Activated naive CD4-positive, alpha-beta T cell treated with anti-CD3 and anti-CD28 coated beads for 36 hours (primary cell): ENCODE measurements at regions of chr7 and their contacts with region 1.

Region 1: DNA sequence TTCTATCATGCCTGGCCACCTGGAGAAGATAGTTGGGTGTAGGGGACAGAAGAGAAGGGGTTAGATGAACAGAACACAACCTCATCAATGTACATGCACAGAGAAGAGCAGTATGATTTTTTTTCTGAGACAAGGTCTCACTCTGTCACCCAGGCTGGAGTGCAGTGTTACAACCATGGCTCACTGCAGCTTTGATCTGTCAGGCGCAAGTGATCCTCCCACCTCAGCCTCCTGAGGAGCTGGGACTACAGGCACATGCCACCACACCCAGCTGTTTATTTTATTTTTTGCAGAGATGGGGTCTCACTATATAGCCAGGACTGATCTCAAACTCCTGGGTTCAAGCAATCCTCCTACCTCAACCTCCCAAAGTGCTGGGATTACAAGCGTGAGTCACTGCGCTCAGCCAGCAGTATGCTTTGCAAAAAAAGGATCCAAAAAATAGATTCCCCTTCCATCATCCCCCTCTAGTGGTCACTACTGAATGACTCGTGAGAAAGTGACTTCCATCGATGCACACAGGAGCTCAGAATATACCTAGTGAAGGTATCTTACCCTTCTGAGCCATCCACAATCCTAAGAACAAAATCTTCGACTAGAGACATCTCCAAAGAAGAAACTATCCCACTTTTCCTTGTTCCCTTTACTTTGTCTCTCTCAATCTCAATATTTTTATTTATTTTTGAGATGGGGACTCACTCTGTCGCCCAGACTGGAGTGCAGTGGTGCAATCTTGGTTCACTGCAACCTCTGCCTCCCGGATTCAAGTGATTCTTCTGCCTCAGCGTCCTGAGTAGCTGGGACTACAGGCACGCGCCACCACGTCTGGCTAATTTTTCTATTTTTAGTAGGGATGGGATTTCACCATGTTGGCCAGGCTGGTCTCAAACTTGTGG is 21.0 kb downstream of the ZCWPW1 start:
- DNase-seq: peak; percentile 61
- H3K4me3 Mint-ChIP-seq: no peak overlapping the region
- H3K27ac Mint-ChIP-seq: no peak overlapping the region
- H3K4me1 Mint-ChIP-seq: peaks cover 2% of the 10 kb centered on the region
- H3K27me3 Mint-ChIP-seq: no peaks in the 10 kb centered on the region

Region 2: GRCh38 chr7:100190048-100190711 is 217.4 kb before region 1 on chr7:
- CTCF ChIA-PET with region 1: interaction called, 6 read pairs
- intact Hi-C with region 1: loop called (anchors 1 kb)
- DNase-seq: no peak
- H3K4me3 Mint-ChIP-seq: no peak overlapping the region
- H3K27ac Mint-ChIP-seq: peak overlapping the region; percentile 80
- H3K4me1 Mint-ChIP-seq: peaks cover 45% of the 10 kb centered on the region
- H3K27me3 Mint-ChIP-seq: no peaks in the 10 kb centered on the region

Region 3: GRCh38 chr7:100342765-100343164 is 64.8 kb before region 1 on chr7:
- CTCF ChIA-PET with region 1: interaction called, 10 read pairs
- intact Hi-C with region 1: no loop called
- DNase-seq: no peak
- H3K4me3 Mint-ChIP-seq: no peak overlapping the region
- H3K27ac Mint-ChIP-seq: peak overlapping the region; percentile 81
- H3K4me1 Mint-ChIP-seq: peaks cover 46% of the 10 kb centered on the region
- H3K27me3 Mint-ChIP-seq: no peaks in the 10 kb centered on the region

Region 4: DNA sequence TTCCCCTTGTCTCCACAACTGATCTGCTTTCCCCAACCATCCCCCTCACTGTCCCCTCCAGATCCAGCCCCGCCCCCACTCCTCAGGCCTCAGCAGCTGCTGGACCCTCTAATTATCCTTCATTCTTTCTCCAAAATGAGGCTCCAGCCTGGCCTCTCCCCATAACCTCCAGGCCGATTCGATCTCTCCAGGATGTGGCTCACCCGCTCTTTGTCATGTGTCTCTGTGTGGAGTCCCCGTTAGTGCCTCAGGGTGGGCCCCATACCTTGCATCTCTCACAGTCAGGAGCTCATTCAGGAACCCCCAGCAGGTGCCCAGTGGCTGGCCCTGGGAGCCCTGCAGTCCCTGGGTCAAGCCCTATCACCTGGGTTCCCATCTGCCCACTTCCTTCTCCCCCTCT is 32.9 kb before region 1 on chr7:
- CTCF ChIA-PET with region 1: interaction called, 13 read pairs
- intact Hi-C with region 1: no loop called
- DNase-seq: no peak
- H3K4me3 Mint-ChIP-seq: no peak overlapping the region
- H3K27ac Mint-ChIP-seq: no peak overlapping the region
- H3K4me1 Mint-ChIP-seq: peaks cover 13% of the 10 kb centered on the region
- H3K27me3 Mint-ChIP-seq: no peaks in the 10 kb centered on the region

Region 5: GRCh38 chr7:100396421-100396982 is 11.0 kb before region 1 on chr7:
- CTCF ChIA-PET with region 1: interaction called, 14 read pairs
- intact Hi-C with region 1: no loop called
- DNase-seq: peak; percentile 85
- H3K4me3 Mint-ChIP-seq: no peak overlapping the region
- H3K27ac Mint-ChIP-seq: no peak overlapping the region
- H3K4me1 Mint-ChIP-seq: peaks cover 28% of the 10 kb centered on the region
- H3K27me3 Mint-ChIP-seq: peaks cover 19% of the 10 kb centered on the region

Region 6: DNA sequence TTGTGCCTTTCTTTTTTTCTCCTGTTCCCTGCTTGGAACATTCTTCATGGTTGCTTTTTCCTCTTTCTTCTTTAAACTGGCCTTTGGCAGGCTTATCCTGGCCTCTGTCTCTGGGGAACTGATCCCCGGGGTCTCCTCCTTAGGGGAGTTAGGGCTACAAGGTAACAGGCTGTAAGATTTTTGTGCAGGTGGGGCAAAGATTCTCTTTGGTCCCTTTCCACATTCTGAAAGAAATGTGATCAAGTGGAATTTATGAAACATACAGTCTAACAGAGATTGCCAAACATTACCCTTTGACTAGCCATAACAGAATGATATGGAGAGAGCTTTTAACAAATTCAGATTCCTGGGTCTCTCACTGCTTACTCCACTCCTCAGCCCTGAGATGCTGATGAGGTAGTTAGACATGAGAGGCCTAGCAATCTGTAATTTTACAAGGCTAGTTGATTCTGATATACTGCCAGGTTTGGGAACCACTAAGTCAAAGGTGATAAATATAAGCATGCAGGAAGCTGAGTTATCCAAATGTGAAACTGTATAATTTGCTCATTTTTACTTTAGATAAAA is 12.2 kb after region 1 on chr7:
- CTCF ChIA-PET with region 1: interaction called, 10 read pairs
- intact Hi-C with region 1: no loop called
- DNase-seq: no peak
- H3K4me3 Mint-ChIP-seq: no peak overlapping the region
- H3K27ac Mint-ChIP-seq: no peak overlapping the region
- H3K4me1 Mint-ChIP-seq: no peaks in the 10 kb centered on the region
- H3K27me3 Mint-ChIP-seq: no peaks in the 10 kb centered on the region

Region 7: DNA sequence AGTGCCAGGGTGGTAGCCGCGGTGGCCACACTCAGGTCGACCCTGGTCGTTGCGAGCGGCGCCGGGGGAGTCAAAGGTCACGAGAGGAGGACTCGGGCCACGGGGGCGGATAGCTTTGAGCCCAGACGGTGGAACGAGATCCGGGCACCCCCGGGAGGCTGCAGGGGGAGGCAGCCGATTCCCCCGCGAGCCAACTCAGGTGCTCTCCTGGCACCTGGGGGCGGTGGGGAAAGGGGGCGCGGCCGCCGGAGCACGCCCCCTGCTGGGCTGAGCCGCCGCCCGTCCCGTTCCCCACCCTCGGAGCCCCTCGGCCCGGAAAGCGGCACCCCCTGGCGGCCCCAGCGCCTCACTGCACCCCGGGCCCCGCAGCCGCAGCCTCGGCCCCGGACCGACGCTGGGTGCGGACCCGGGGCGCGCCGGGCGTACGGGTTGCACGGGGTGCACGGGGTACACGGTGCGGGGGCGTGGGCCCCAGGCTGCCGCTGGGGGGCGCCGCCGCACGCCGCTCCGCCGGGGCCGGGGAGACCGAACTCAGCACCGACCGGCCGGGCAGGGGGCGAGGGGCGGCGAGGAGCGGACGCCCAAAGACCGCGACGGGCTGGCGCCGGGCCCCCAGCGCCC is 75.7 kb after region 1 on chr7:
- CTCF ChIA-PET with region 1: no interaction called
- intact Hi-C with region 1: no loop called
- DNase-seq: peak; percentile 75
- H3K4me3 Mint-ChIP-seq: peak overlapping the region; percentile 76
- H3K27ac Mint-ChIP-seq: no peak overlapping the region
- H3K4me1 Mint-ChIP-seq: peaks cover 12% of the 10 kb centered on the region
- H3K27me3 Mint-ChIP-seq: no peaks in the 10 kb centered on the region